WTC11 (cell line): ENCODE measurements at regions of chr5 and their contacts with region 1.

Region 1: DNA sequence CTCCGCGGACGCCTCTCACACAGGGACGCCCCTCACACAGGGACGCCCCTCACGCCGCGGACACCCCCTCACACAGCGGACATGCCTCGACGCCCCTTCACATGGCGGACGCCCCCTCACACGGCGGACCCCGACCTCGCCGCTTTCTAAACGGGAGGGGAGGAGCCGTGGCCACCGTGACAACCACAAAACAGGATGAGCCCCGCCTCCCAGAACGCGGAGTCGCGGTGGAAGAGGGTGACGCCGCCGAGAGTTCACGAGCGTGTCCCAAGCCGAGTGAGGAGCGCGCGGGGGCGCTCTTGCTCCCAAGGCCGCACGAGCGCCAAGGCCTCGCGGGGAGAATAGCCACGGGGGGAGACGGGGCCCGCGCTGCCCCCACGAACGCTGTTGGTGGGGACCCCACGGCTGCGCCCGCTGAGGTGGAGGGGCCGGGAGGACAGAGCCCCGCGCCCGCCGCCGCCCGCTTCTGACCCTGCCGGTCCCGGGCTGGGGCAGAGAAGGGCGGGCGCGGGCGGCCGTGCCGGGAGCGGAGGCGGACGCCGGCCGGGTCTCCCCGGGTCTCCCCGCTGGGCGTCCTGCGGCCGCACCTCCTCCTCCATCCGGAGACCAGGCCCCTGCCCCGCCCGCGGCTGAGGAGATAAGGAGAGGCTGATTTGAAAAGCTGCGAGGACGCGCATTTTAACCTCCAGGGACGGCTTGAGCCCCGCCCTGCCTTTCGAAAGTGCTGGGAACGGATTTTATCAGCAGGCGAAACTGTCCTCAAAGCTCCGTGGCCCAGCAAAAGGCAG is 3.9 kb upstream of the NKD2 start:
- DNase-seq: peak; percentile 59
- ATAC-seq: peak; percentile 31
- H3K4me3 Mint-ChIP-seq: peak overlapping the region; percentile 62
- H3K27ac Mint-ChIP-seq: no peak overlapping the region
- H3K4me1 Mint-ChIP-seq: peaks cover 11% of the 10 kb centered on the region
- H3K27me3 Mint-ChIP-seq: peaks cover 51% of the 10 kb centered on the region
- CTCF ChIP-seq: no peak

Region 2: GRCh38 chr5:923281-923873 is 81.3 kb before region 1 on chr5:
- CTCF ChIA-PET with region 1: interaction called, 18 read pairs
- POLR2A ChIA-PET with region 1: interaction called, 3 read pairs
- DNase-seq: peak; percentile 90
- ATAC-seq: peak; percentile 89
- H3K4me3 Mint-ChIP-seq: no peak overlapping the region
- H3K27ac Mint-ChIP-seq: no peak overlapping the region
- H3K4me1 Mint-ChIP-seq: peaks cover 5% of the 10 kb centered on the region; the same call in 1 of the 2 replicates
- H3K27me3 Mint-ChIP-seq: peaks cover 26% of the 10 kb centered on the region
- CTCF ChIP-seq: peak; percentile 75

Region 3: GRCh38 chr5:956941-957747 is 47.5 kb before region 1 on chr5:
- CTCF ChIA-PET with region 1: interaction called, 11 read pairs
- POLR2A ChIA-PET with region 1: no interaction called
- DNase-seq: peak; percentile 34
- ATAC-seq: peak; percentile 21
- H3K4me3 Mint-ChIP-seq: no peak overlapping the region
- H3K27ac Mint-ChIP-seq: no peak overlapping the region; the same call in 1 of the 2 replicates
- H3K4me1 Mint-ChIP-seq: no peaks in the 10 kb centered on the region
- H3K27me3 Mint-ChIP-seq: no peaks in the 10 kb centered on the region
- CTCF ChIP-seq: peak; percentile 38; the same call in 1 of the 2 replicates

Region 4: GRCh38 chr5:989961-990530 is 14.6 kb before region 1 on chr5:
- CTCF ChIA-PET with region 1: interaction called, 31 read pairs
- POLR2A ChIA-PET with region 1: no interaction called
- DNase-seq: peak; percentile 62
- ATAC-seq: peak; percentile 88
- H3K4me3 Mint-ChIP-seq: no peak overlapping the region
- H3K27ac Mint-ChIP-seq: no peak overlapping the region
- H3K4me1 Mint-ChIP-seq: peaks cover 5% of the 10 kb centered on the region
- H3K27me3 Mint-ChIP-seq: peaks cover 6% of the 10 kb centered on the region
- CTCF ChIP-seq: no peak

Region 5: DNA sequence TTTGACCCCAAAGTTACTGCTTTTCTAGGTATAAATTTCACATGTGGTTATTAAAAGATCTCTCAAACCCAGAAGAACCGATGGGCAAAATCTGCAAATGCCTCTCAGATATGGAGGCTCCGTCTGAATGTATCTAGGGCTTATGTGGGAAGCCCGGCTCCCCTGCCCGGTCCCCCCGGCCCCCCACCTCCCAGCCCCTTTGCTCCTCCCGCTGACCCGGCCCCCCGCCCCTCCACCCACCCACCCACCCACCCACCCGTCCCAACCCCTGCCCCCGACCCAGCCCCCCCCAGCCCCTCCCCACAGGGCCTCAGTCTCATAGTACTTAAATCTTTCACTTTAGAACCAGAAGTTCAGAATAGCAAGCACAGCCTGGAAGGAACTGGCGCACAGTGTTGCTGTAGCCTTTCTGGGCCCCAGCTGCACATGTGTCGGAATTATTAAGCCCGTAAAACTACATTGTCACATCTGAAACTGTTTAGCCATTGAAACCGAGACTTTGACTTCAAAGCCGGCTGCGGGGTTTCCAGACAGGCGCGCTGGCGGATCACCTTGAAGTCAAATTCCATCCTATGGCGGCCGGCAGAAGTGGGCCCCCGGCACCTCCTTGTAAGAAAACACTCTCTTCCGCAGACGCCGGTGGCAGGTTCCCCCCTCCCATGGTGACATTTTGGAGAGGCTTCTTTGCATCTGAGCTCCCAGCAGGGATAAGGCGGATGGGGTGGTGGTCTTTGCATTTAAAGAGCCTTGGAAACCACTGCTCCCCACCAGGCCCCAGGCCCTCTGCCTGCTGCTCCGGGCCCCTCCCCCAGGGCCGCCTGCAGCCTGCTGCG is 16.7 kb after region 1 on chr5:
- CTCF ChIA-PET with region 1: interaction called, 38 read pairs
- POLR2A ChIA-PET with region 1: no interaction called
- DNase-seq: peak; percentile 51
- ATAC-seq: peak; percentile 80
- H3K4me3 Mint-ChIP-seq: no peak overlapping the region
- H3K27ac Mint-ChIP-seq: no peak overlapping the region
- H3K4me1 Mint-ChIP-seq: peaks cover 4% of the 10 kb centered on the region; the same call in 1 of the 2 replicates
- H3K27me3 Mint-ChIP-seq: no peaks in the 10 kb centered on the region
- CTCF ChIP-seq: no peak